Breast epithelium (tissue), 4 donors: ENCODE measurements at regions of chrX and their contacts with region 1.

Region 1: GRCh38 chrX:11597479-11597878 is 68.2 kb downstream of the ARHGAP6 start:
- DNase-seq: no peak
- H3K4me3 ChIP-seq: no peak overlapping the region
- H3K27ac ChIP-seq: no peak overlapping the region
- H3K4me1 ChIP-seq: no peaks in the 10 kb centered on the region
- H3K27me3 ChIP-seq: peaks cover 0 to 10% of the 10 kb centered on the region in 2 donors
- CTCF ChIP-seq: no peak
- POLR2A ChIP-seq: no peak

Region 2: DNA sequence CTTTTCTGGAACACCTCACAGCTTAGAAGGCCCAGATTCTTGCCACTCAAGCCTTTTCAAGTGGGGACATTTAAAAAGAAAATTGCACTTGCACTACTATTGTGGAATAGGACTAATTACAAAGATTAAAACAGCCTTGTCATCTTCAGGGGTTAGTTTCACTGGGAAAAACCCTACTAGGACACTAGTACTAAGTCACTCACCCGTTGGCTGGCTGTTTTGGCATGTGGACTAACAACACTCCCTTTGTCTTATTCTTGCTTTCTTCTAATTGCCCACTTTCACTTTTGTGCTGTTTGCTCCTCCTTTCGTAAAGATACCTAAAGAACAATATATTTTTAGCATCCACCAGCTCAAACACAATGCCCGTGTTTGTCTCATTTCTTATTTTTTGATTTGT is 776.2 kb before region 1 on chrX:
- intact Hi-C with region 1: no loop called
- DNase-seq: no peak
- H3K4me3 ChIP-seq: no peak overlapping the region
- H3K27ac ChIP-seq: no peak overlapping the region
- H3K4me1 ChIP-seq: no peaks in the 10 kb centered on the region
- H3K27me3 ChIP-seq: peaks cover 0 to 3% of the 10 kb centered on the region in 2 donors
- CTCF ChIP-seq: no peak
- POLR2A ChIP-seq: no peak

Region 3: GRCh38 chrX:10989386-10989785 is 608.1 kb before region 1 on chrX:
- intact Hi-C with region 1: loop called (anchors 5 kb)
- DNase-seq: no peak
- H3K4me3 ChIP-seq: no peak overlapping the region
- H3K27ac ChIP-seq: no peak overlapping the region
- H3K4me1 ChIP-seq: no peaks in the 10 kb centered on the region
- H3K27me3 ChIP-seq: peaks cover 0 to 8% of the 10 kb centered on the region in 2 donors
- CTCF ChIP-seq: no peak
- POLR2A ChIP-seq: no peak

Region 4: GRCh38 chrX:11470250-11470974 is 127.1 kb before region 1 on chrX:
- intact Hi-C with region 1: no loop called
- DNase-seq: no peak
- H3K4me3 ChIP-seq: no peak overlapping the region
- H3K27ac ChIP-seq: no peak overlapping the region
- H3K4me1 ChIP-seq: no peaks in the 10 kb centered on the region
- H3K27me3 ChIP-seq: peaks cover 0 to 24% of the 10 kb centered on the region in 2 donors
- CTCF ChIP-seq: no peak
- POLR2A ChIP-seq: no peak